Activated T-helper 1 cell treated with anti-CD3 and anti-CD28 coated beads, Interleukin-12 subunit alpha, Interleukin-12 subunit beta, Interleukin-2, Interleukin-4 antibody, amounts not matched to agents 30 ng/mL and 10 ng/mL and 1 ng/mL, durations not matched to agents 14 hours and 24 hours and 36 hours (primary cell): ENCODE measurements at regions of chr4 and their contacts with region 1.

Region 1: GRCh38 chr4:108834835-108835384 is 72.1 kb upstream of the ETNPPL start:
- DNase-seq: no peak
- H3K4me3 Mint-ChIP-seq: no peak overlapping the region
- H3K27ac Mint-ChIP-seq: no peak overlapping the region
- H3K4me1 Mint-ChIP-seq: peaks cover 8% of the 10 kb centered on the region
- H3K27me3 Mint-ChIP-seq: peaks cover 5% of the 10 kb centered on the region

Region 2: GRCh38 chr4:108867476-108867875 is 32.6 kb after region 1 on chr4:
- intact Hi-C with region 1: no loop called
- DNase-seq: no peak
- H3K4me3 Mint-ChIP-seq: no peak overlapping the region
- H3K27ac Mint-ChIP-seq: no peak overlapping the region
- H3K4me1 Mint-ChIP-seq: no peaks in the 10 kb centered on the region
- H3K27me3 Mint-ChIP-seq: peaks cover 2% of the 10 kb centered on the region

Region 3: DNA sequence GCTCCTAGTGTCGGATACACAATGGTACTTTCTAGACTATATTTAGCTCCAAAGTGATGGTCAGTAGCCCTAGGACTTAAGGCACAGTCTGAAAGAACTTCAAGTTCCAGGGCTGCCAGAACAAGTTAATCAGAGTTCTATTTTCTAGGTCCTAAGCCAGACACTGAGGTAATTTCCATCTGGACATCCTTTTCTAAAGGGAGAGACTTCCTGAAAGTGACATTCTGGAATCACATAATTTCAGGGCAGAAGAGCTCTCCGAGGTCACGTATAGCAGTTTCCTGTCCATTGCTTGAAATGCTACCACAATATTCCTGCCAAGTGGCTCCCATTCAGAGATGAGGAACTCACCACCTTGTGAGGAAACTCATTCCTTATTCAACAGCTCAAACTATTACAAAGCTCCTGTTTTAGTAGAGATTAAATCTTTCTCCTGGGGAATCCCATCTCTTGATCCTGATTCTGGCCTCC is 349.6 kb after region 1 on chr4:
- intact Hi-C with region 1: loop called (anchors 10 kb)
- DNase-seq: no peak
- H3K4me3 Mint-ChIP-seq: no peak overlapping the region
- H3K27ac Mint-ChIP-seq: no peak overlapping the region
- H3K4me1 Mint-ChIP-seq: no peaks in the 10 kb centered on the region
- H3K27me3 Mint-ChIP-seq: no peaks in the 10 kb centered on the region

Region 4: DNA sequence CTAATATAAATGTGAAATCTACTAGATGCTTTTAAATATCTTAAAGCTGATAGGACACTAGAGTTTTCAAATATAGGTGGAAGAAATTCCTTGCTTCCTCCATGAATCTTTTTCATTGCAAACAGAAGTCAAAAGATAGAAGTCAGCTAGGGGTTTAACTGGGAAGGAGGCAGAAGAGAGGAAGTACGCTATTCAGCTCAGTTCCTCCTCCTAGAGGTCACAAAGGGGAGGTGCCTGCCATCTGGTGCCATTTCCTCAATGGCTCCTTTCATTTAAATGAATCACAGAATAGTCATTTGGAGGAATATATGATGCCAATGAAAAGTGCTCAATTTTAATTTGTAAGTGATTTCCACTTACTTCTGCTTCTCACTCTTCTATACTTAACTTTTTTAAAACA is 459.1 kb after region 1 on chr4:
- intact Hi-C with region 1: loop called (anchors 2 kb)
- DNase-seq: no peak
- H3K4me3 Mint-ChIP-seq: no peak overlapping the region
- H3K27ac Mint-ChIP-seq: no peak overlapping the region
- H3K4me1 Mint-ChIP-seq: no peaks in the 10 kb centered on the region
- H3K27me3 Mint-ChIP-seq: peaks cover 28% of the 10 kb centered on the region